ENCODE measurements at regions of chr17 and their contacts with region 1.

Region 1: GRCh38 chr17:48878918-48879898 is 13.4 kb upstream of the ATP5MC1 start:
- DNase-seq: peak in 2 of 5 donors; percentile 42 to 54
- ATAC-seq: peak; percentile 62 to 88 (median 86)
- H3K4me3 ChIP-seq: no peak overlapping the region
- H3K27ac ChIP-seq: no peak overlapping the region
- H3K4me1 ChIP-seq: peaks cover 0 to 6% (median 0%) of the 10 kb centered on the region in 12 donors
- H3K27me3 ChIP-seq: no peaks in the 10 kb centered on the region
- CTCF ChIP-seq: peak; percentile 84 to 96 (median 92)
- POLR2A ChIP-seq: no peak

Region 2: GRCh38 chr17:48671697-48672171 is 207.5 kb before region 1 on chr17:
- intact Hi-C with region 1: loop called in 7 of 10 experiments (anchors 2 to 5 kb)
- DNase-seq: peak; percentile 65 to 84 (median 78)
- ATAC-seq: peak in 3 of 4 donors; percentile 70 to 79 (median 74)
- H3K4me3 ChIP-seq: peak overlapping the region in 10 of 12 donors; percentile 15 to 41 (median 28)
- H3K27ac ChIP-seq: no peak overlapping the region
- H3K4me1 ChIP-seq: peaks cover 0 to 11% (median 4%) of the 10 kb centered on the region in 12 donors
- H3K27me3 ChIP-seq: peaks cover 0 to 78% (median 33%) of the 10 kb centered on the region in 9 donors
- CTCF ChIP-seq: peak; percentile 79 to 92 (median 86)
- POLR2A ChIP-seq: no peak

Region 3: DNA sequence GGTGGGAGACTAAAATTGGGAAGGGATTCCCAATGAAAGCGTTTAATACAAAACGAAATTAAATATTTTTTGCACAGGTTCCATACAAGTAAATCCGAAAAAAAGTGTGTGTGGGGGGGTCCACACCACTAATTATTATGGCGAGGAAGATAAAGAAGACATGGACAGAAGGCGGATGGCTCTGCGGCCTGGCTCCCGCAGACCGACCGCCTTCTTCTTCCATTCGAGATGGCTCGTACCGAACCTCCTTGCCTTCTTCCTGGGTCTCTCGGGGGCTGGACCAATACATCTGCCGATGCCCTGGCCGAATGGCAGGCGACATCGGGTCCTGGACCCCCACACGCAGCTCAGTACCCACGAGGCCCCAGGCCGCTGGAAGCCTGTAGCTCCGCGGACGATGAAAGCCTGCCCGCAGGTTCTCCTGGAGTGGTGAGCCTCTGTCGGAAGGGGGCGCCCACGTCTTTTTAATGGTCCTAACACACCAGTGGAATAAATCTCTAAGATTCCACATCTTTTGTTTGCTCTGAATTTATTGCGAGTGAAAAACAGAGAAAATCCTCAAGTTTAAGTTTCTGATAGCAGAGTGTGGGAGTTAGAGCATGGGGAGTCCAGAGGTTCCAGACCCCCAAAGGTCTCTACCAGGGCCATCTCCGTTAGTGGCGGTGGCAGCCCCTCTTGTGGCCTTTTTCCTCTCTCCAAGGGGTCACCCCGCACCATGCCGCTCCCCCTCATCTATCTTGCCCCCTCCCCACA is 154.8 kb before region 1 on chr17:
- intact Hi-C with region 1: loop called (anchors 2 to 5 kb)
- DNase-seq: peak; percentile 77 to 90 (median 83)
- ATAC-seq: peak; percentile 56 to 93 (median 85)
- H3K4me3 ChIP-seq: no peak overlapping the region
- H3K27ac ChIP-seq: no peak overlapping the region
- H3K4me1 ChIP-seq: peaks cover 0 to 40% (median 17%) of the 10 kb centered on the region in 12 donors
- H3K27me3 ChIP-seq: peaks cover 78 to 100% (median 100%) of the 10 kb centered on the region in 9 donors
- CTCF ChIP-seq: peak; percentile 44 to 82 (median 72)
- POLR2A ChIP-seq: no peak

Region 4: DNA sequence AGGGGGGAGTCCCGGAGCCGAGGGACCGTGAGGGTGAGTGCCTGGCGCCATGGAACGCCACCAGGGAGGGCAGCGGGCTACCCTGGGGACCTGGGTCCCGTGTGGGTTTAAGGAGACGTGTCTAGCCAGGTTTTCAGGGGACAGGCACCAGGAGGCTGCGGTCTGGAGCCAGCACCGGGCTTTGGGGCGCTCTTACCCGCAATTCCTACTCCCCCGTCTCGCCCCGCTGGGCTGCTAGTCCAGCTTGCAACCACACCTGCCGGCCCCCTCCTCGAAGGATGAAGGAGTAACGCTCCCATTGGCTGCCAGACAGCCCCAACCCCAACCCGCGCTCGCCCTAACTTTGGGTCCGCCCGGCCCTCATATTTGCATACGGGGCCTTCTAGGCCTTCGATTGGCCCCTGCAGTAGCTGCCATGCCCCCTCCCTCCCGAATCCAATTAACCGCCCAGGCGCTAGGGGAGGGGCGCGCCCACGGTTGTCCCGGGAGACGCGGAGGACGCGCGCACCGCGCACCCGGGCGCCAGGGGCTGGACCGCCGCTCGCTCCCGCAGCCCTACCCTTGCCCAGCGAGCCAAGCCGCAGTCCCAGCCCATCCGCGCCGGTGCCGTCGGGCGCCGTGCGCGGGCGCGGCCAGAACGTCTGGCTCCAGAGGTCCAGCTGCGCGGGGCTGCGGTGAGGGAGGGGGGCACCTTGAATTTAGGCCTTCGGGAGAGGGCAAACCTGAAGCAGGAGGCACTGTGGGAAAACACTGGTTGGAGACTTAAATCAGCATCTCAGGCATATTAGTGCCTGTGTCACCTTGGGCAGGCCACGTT is 62.2 kb before region 1 on chr17 and contains the start of gene TTLL6:
- intact Hi-C with region 1: loop called in 9 of 10 experiments (anchors 1 to 5 kb)
- DNase-seq: peak; percentile 86 to 93 (median 88)
- ATAC-seq: peak; percentile 97 to 99 (median 98)
- H3K4me3 ChIP-seq: peak within 1 kb of the TSS; percentile 24 to 67 (median 52)
- H3K27ac ChIP-seq: peak within 1 kb of the TSS in 1 of 12 donors; percentile 42
- H3K4me1 ChIP-seq: peaks cover 0 to 18% (median 9%) of the 10 kb centered on the region in 12 donors
- H3K27me3 ChIP-seq: peaks cover 0 to 35% (median 0%) of the 10 kb centered on the region in 9 donors
- CTCF ChIP-seq: no peak
- POLR2A ChIP-seq: no peak
- total RNA-seq, gene TTLL6: 0.55 TPM in 1 of 9 donors, not detected in the others

Region 5: DNA sequence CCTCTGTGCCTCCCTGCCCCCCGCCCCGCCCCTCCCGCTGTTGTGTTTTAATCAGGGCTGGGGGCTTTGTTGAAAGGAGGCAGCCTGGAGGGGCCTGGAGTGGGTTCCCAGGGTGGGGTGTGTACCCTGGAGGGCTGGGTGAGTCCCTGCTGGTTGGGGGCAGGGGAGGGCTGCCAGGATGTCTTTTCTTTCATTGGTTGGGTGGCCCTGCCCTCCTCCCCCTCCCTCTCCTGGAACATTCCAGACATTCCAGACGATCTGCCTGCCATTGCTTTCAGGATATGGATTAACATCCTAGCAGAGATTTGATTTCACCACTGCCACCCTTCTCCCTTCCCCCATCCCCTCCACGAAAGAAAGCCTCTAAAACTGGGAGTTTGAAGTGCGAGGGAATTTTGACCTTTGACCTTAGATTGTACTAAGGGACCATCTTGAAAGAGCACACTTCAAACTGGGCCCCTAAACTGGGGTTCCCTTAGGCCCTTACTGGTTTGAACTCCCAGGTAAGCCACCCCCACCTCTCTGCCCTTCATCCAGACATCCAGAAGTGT is 143.3 kb after region 1 on chr17:
- intact Hi-C with region 1: loop called in 1 of 10 experiments (anchors 10 kb)
- DNase-seq: no peak
- ATAC-seq: no peak
- H3K4me3 ChIP-seq: no peak overlapping the region
- H3K27ac ChIP-seq: no peak overlapping the region
- H3K4me1 ChIP-seq: no peaks in the 10 kb centered on the region
- H3K27me3 ChIP-seq: peaks cover 0 to 53% (median 2%) of the 10 kb centered on the region in 9 donors
- CTCF ChIP-seq: no peak
- POLR2A ChIP-seq: no peak

Region 6: GRCh38 chr17:49045376-49045775 is 166.2 kb after region 1 on chr17:
- intact Hi-C with region 1: no loop called
- DNase-seq: no peak
- ATAC-seq: no peak
- H3K4me3 ChIP-seq: no peak overlapping the region
- H3K27ac ChIP-seq: no peak overlapping the region
- H3K4me1 ChIP-seq: no peaks in the 10 kb centered on the region
- H3K27me3 ChIP-seq: peaks cover 0 to 12% (median 0%) of the 10 kb centered on the region in 9 donors
- CTCF ChIP-seq: no peak
- POLR2A ChIP-seq: no peak

Measured in heart left ventricle (tissue), 16 donors.